ENCODE measurements at regions of chr6 and their contacts with region 1.

Region 1: GRCh38 chr6:134437376-134437775 is 119.5 kb upstream of the SGK1 start:
- DNase-seq: peak; percentile 38
- CTCF ChIP-seq: peak; percentile 21

Region 2: DNA sequence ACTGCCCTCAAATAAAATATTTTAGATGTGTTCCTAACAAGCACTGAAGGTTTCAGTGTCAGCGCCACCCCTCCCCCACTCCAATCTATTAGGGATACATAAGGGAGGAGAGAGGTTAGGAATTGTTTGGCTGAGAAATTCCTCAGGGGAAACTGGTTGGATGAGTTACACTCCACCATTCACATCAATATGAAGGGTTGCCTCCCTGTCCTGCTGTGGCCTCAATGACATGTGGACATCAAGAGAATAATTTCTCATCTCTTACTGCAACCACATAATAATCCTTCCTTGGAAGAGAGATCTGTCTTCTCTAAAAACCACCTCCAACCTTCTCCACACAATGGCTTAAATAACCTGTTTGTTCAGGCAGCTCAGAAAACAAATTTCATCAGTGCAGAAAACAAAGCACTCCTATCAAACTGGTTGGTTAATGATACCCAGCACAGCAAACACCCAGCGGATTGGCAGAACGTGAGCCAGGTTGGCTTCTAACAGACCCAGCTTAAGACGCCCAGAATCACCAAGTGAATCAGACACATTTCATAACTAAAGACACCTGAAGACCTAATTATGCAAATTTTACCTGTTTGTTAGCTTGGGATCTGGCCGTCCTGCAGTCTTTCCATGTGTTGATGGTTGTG is 16.6 kb after region 1 on chr6:
- CTCF ChIA-PET with region 1: interaction called, 10 read pairs
- POLR2A ChIA-PET with region 1: no interaction called
- DNase-seq: no peak
- CTCF ChIP-seq: no peak

Region 3: GRCh38 chr6:134609716-134610261 is 172.4 kb after region 1 on chr6:
- CTCF ChIA-PET with region 1: no interaction called
- POLR2A ChIA-PET with region 1: no interaction called
- DNase-seq: no peak
- CTCF ChIP-seq: no peak